ENCODE measurements at regions of chr13 and their contacts with region 1.

Region 1: DNA sequence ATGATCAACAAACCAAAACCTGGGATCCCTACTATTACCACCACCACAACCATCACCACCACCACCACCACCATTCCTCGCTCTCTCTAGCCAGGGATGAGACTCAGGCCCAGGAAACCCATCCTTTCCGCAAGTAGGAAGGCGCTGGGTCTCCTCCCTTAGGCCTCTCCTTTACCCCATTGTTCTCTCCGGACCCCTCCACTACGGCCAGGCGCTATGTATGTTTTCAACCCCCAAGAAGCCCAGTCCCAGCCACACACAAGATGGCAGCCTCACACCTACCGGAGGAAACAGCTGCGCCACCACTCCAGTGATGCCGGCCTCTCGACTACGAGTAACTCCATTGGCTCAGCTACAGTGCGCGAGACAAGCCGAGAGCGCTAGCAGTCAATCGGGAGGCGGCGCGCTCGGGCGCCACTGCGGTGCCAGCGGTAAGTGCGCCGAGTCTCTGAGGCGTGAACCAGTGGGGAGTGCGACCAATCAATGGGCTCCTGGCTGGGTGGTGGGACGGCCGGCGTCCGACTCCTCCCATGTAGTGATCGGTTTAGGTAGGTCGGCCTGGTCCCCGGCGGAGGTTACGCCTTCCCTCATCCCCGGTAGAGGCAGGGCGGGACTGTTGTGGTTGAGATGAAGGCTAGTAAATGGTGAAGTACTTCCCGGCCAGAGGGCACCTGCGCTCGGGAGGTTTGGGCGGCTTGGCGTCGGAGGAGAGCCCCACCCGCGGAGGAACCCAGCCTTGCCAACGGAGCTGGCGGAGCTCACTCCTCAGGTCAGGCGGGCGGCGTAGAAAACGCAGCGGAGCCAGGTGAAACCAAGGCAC is at the starts of genes CAB39L and SETDB2:
- DNase-seq: peak; percentile 100
- H3K4me3 Mint-ChIP-seq: peak within 1 kb of the TSS; percentile 95
- H3K27ac Mint-ChIP-seq: peak within 1 kb of the TSS; percentile 98
- H3K4me1 Mint-ChIP-seq: peaks cover 56% of the 10 kb centered on the region
- H3K27me3 Mint-ChIP-seq: no peaks in the 10 kb centered on the region
- total RNA-seq, gene CAB39L: 5.5 TPM
- total RNA-seq, gene SETDB2: 14.8 to 16.0 TPM

Region 2: GRCh38 chr13:48975856-48976575 is 467.9 kb before region 1 on chr13 and contains the start of gene FNDC3A:
- CTCF ChIA-PET with region 1: no interaction called
- POLR2A ChIA-PET with region 1: interaction called, 20 read pairs
- DNase-seq: peak; percentile 89
- H3K4me3 Mint-ChIP-seq: peak within 1 kb of the TSS; percentile 94
- H3K27ac Mint-ChIP-seq: peak within 1 kb of the TSS; percentile 100
- H3K4me1 Mint-ChIP-seq: peaks cover 41% of the 10 kb centered on the region
- H3K27me3 Mint-ChIP-seq: no peaks in the 10 kb centered on the region
- total RNA-seq, gene FNDC3A: 27.0 to 27.8 TPM

Region 3: DNA sequence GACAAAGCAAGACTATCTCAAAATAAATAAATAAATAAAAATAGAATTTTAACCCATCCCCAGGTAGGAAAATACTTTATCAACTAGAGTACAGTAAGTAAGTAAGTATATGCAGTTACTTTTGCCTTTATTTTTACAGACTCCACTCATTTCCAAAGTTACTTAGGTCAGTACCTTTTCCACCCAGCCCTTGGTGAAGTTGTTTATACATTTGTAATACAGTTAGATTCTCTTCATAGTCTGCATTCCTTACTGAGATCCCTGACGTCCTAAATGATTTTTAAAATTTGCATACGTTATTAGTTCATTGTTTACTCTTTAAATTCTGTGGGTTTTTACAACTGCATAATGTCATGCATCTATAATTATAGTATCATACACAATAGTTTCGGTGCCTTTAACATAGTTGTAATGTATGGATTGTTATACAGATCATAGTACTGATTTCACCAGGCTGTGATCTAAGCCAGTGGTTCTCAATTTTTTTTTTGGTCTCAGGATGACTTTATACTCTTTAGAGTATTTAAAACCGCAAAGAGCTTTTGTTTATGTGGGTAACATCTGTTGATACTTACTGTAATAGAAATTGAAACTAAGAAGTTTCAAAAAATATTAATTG is 10.6 kb after region 1 on chr13:
- CTCF ChIA-PET with region 1: interaction called, 21 read pairs
- POLR2A ChIA-PET with region 1: interaction called, 43 read pairs
- DNase-seq: no peak
- H3K4me3 Mint-ChIP-seq: peak overlapping the region; percentile 7
- H3K27ac Mint-ChIP-seq: peak overlapping the region; percentile 79
- H3K4me1 Mint-ChIP-seq: peaks cover 42% of the 10 kb centered on the region
- H3K27me3 Mint-ChIP-seq: no peaks in the 10 kb centered on the region

Region 4: DNA sequence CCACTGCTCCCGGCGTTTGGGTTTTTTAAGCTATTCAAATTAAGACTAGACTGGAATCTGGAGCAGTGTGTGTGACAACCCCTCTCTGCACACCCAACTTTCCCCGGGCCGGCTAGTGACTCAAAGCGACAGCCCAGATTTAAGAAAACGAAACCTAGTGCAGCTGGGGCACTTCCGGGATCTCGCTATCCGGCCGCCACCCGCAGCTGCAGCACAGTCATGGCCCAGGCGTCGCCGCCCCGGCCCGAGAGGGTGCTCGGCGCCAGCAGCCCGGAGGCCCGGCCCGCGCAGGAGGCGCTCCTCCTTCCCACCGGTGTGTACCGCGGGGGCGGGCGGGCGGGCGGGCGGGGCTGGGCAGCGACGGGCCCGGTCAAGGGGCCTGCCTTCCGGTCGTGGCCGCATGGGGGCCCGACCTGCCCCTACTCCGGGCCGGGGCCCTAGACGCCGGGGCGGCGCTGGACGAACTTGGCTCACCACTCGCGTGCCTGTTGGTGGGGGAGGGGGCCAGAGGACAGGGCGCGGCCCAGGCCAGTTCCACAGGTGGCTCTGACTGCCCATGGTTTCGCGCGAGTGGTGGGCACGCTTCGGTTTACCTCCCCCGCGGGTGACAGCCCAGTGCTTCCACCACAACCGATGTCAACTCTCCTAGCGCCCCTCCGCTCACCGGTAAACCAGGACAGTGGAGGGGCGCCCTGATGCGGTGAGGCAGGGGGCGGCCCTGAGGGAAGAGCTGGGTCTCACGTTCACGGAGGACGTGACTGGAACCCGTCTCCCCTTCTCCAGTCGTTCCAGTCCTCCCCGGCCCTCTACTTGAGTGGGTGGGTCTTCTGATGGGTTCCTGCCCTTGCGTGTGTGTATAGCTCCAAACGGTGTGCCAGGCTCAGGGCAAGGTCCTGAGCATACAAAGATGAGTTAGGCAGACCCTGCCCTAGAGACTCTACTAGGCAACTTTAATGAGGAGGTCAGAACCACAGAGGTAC is 52.2 kb after region 1 on chr13 and contains the start of gene PHF11:
- CTCF ChIA-PET with region 1: interaction called, 15 read pairs
- POLR2A ChIA-PET with region 1: interaction called, 174 read pairs
- DNase-seq: peak; percentile 90
- H3K4me3 Mint-ChIP-seq: peak within 1 kb of the TSS; percentile 97
- H3K27ac Mint-ChIP-seq: peak within 1 kb of the TSS; percentile 100
- H3K4me1 Mint-ChIP-seq: peaks cover 60% of the 10 kb centered on the region
- H3K27me3 Mint-ChIP-seq: no peaks in the 10 kb centered on the region
- total RNA-seq, gene PHF11: 135 to 144 TPM

Region 5: GRCh38 chr13:49585220-49586157 is 141.6 kb after region 1 on chr13 and contains the start of gene RCBTB1:
- CTCF ChIA-PET with region 1: interaction called, 6 read pairs
- POLR2A ChIA-PET with region 1: interaction called, 15 read pairs
- DNase-seq: peak; percentile 73
- H3K4me3 Mint-ChIP-seq: peak within 1 kb of the TSS; percentile 89
- H3K27ac Mint-ChIP-seq: peak within 1 kb of the TSS; percentile 85
- H3K4me1 Mint-ChIP-seq: peaks cover 38% of the 10 kb centered on the region
- H3K27me3 Mint-ChIP-seq: no peaks in the 10 kb centered on the region
- total RNA-seq, gene RCBTB1: 18.5 to 19.0 TPM